HCT116 (cell line): ENCODE measurements at regions of chr4 and their contacts with region 1.

Region 1: GRCh38 chr4:14671146-14671545 is 331.1 kb upstream of the CPEB2 start:
- DNase-seq: no peak
- ATAC-seq: no peak
- H3K4me3 ChIP-seq: no peak overlapping the region
- H3K27ac ChIP-seq: no peak overlapping the region
- H3K4me1 ChIP-seq: no peaks in the 10 kb centered on the region
- H3K27me3 ChIP-seq: no peaks in the 10 kb centered on the region
- CTCF ChIP-seq: no peak
- POLR2A ChIP-seq: no peak
- RAD21 ChIP-seq: no peak

Region 2: GRCh38 chr4:14277505-14277904 is 393.6 kb before region 1 on chr4:
- CTCF ChIA-PET with region 1: no interaction called
- POLR2A ChIA-PET with region 1: no interaction called
- RAD21 ChIA-PET with region 1: no interaction called
- intact Hi-C with region 1: no loop called
- DNase-seq: no peak
- ATAC-seq: no peak
- H3K4me3 ChIP-seq: no peak overlapping the region
- H3K27ac ChIP-seq: no peak overlapping the region
- H3K4me1 ChIP-seq: no peaks in the 10 kb centered on the region
- H3K27me3 ChIP-seq: no peaks in the 10 kb centered on the region
- CTCF ChIP-seq: no peak
- POLR2A ChIP-seq: no peak
- RAD21 ChIP-seq: no peak

Region 3: DNA sequence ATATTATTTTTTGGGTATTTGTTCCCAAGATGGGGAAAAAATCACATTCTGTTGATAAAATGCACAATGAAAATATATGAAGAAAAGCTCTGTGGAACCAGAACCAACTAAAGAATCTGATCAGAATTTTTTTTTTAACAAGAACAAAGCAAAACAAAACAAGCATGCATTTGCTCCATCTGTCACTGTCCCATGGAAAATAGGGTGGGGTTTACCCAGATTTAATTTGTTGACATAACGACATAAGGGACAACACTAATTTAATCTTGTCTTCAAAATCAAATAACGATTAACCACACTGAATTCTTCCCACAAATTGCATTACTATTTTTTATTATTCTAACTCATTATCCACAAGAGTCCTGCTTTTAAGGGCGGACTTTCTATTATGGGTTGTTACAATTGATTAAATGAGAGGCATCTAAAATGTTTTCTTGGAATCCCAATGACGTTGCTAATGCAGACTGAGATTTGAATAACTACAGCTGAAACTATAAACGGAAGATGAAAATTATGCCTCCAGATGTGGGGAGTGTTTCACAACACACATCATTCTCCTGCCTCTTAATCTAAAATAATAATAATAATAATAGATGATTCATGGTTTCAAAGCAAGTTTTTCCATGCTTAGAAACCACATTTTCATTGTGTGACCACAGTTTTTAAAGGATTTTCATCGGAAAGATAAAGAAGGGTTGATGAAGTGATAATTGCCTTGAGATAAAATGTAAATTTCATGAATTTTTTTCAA is 24.1 kb after region 1 on chr4:
- CTCF ChIA-PET with region 1: no interaction called
- POLR2A ChIA-PET with region 1: no interaction called
- RAD21 ChIA-PET with region 1: no interaction called
- intact Hi-C with region 1: loop called (anchors 1 kb)
- DNase-seq: no peak
- ATAC-seq: no peak
- H3K4me3 ChIP-seq: no peak overlapping the region
- H3K27ac ChIP-seq: no peak overlapping the region
- H3K4me1 ChIP-seq: no peaks in the 10 kb centered on the region
- H3K27me3 ChIP-seq: no peaks in the 10 kb centered on the region
- CTCF ChIP-seq: no peak
- POLR2A ChIP-seq: no peak
- RAD21 ChIP-seq: no peak